ENCODE measurements at regions of chr11 and their contacts with region 1.

Region 1: DNA sequence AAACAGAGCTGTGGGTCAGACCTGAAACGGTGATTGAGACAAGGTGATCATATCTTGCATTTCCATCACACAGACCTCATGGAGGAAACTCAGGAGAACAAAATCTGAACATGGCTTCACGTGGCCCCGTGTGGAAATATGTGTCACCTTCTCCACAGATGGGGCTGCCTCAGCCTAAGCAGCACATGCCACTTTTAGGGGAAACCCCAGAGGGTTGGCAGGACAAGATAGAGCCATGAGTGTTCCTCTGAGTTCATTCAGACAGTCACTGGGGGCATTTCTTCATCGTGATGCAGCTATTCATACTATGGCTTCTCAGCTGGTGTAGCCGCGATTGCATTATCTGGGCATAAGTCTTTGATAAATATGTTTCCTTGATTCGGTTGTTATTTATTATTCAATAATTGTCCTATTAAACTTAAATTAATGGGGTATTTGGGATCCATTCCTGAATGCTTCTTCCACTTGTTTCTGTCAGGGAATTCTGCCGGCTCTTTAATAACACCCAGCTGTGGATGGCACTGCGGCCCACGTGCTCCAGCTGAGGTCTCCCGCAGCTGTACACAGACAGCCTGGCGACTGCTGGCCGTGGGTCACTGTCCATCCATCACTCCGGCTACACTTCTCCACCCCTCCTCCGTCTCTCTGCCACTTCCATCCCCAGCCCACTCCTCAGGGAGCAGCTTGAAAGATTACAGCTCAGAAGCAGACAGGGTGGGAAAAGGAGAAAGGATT is 485.1 kb downstream of the OPCML start:
- DNase-seq: no peak
- H3K4me3 ChIP-seq: no peak overlapping the region
- H3K27ac ChIP-seq: no peak overlapping the region
- H3K4me1 ChIP-seq: no peaks in the 10 kb centered on the region
- H3K27me3 ChIP-seq: no peaks in the 10 kb centered on the region
- CTCF ChIP-seq: no peak
- EP300 ChIP-seq: no peak
- POLR2A ChIP-seq: no peak

Region 2: GRCh38 chr11:131591051-131591461 is 1456.1 kb before region 1 on chr11:
- in situ Hi-C with region 1: no loop called
- intact Hi-C with region 1: no loop called
- DNase-seq: no peak
- H3K4me3 ChIP-seq: no peak overlapping the region
- H3K27ac ChIP-seq: no peak overlapping the region
- H3K4me1 ChIP-seq: no peaks in the 10 kb centered on the region
- H3K27me3 ChIP-seq: no peaks in the 10 kb centered on the region
- CTCF ChIP-seq: no peak
- EP300 ChIP-seq: no peak
- POLR2A ChIP-seq: no peak

Region 3: DNA sequence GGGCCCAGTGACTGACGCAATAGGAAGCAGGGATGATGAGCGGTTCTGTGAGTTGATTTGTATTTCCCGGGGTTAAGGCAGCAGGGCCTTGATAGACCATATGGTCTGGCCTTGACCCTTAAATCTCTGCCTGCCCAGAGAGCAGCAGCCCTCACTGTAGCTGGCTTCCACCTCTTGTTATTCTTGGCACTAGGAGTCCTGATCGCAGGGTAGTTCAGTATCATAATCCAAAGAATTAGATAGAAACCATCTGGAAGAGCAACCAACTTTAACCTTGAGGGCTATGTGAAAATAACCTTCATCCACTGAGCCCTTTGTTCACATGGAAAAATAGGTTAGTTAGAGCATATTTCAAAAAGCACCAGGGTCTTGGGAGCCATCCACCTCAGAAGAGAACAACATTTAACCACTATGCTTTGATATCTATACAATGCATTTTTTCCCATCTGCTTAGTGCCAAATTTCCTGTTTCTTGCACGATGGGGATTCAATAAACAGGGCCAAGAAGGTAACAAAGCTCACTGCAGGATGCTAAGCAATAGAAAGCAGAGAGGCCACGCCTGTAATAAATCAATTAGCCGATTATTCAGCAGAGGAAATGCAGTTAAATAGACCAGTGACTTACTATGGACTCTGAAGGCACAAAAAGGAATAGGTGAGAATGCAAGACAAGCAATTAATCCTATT is 276.2 kb before region 1 on chr11:
- in situ Hi-C with region 1: no loop called
- intact Hi-C with region 1: loop called (anchors 5 kb)
- DNase-seq: no peak
- H3K4me3 ChIP-seq: no peak overlapping the region
- H3K27ac ChIP-seq: no peak overlapping the region
- H3K4me1 ChIP-seq: no peaks in the 10 kb centered on the region
- H3K27me3 ChIP-seq: no peaks in the 10 kb centered on the region
- CTCF ChIP-seq: no peak
- EP300 ChIP-seq: no peak
- POLR2A ChIP-seq: no peak

Region 4: DNA sequence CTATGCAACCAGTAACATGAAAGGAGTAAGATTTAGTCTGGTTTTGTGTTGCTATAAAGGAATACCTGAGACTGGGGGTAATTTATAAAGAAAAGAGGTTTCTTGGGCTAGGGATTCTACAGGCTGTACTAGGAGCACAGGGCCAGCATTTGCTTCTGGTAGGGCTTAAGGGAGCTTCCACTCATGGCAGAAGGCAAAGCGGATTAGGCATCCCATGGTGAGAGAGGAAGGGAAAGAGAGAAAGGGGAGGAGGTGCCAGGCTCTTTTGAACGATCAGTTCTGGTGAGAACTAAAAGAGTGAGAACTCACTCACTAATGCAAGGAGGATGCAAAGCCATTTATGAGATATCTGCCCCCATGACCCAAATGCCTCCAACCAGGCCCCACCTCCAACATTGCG is 201.9 kb after region 1 on chr11:
- in situ Hi-C with region 1: no loop called
- intact Hi-C with region 1: no loop called
- DNase-seq: no peak
- H3K4me3 ChIP-seq: no peak overlapping the region
- H3K27ac ChIP-seq: no peak overlapping the region
- H3K4me1 ChIP-seq: no peaks in the 10 kb centered on the region
- H3K27me3 ChIP-seq: no peaks in the 10 kb centered on the region
- CTCF ChIP-seq: no peak
- EP300 ChIP-seq: no peak
- POLR2A ChIP-seq: no peak

Region 5: DNA sequence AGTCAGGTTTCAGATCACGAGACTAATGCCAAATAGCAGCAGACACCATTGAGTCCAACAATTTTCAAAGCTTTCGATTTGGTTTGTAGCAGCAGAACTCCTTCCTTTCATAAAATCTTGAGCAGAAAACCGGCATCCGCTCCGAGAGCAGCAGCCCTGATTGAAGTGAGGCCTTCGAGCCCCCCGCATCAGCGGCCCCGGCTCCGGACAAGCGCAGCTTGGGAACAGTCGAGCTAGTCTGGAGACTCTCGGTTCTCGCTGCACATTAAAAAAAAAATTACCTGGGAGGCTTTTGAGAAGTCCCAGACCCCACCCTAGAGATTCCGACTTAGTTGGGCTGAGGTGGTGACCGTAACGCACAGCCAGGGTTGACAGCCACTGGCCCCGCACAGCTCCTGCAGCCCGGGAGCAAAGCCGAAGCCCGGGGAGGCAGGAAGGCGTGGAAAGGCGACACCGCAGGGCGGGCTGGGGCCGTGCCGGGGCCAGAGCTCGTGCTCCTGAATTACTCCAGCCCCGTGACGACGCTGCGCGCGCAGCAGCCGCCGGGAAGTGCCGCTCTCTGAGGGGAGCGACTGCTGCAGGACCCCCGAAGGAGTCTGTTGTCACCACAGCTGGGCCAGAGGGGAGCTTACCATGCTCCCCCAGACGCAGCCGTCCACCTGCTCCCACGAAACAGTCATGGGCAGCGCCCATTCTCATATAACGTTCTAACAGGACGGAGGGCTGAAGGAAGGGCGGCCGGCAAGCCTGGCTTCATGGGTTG is 740.4 kb after region 1 on chr11:
- in situ Hi-C with region 1: no loop called
- intact Hi-C with region 1: no loop called
- DNase-seq: peak; percentile 9
- H3K4me3 ChIP-seq: peak overlapping the region in 1 of 4 donors; percentile 30
- H3K27ac ChIP-seq: no peak overlapping the region
- H3K4me1 ChIP-seq: no peaks in the 10 kb centered on the region
- H3K27me3 ChIP-seq: peaks cover 22% of the 10 kb centered on the region
- CTCF ChIP-seq: no peak
- EP300 ChIP-seq: no peak
- POLR2A ChIP-seq: no peak